RWPE1 (cell line): ENCODE measurements at regions of chr11 and their contacts with region 1.

Region 1: DNA sequence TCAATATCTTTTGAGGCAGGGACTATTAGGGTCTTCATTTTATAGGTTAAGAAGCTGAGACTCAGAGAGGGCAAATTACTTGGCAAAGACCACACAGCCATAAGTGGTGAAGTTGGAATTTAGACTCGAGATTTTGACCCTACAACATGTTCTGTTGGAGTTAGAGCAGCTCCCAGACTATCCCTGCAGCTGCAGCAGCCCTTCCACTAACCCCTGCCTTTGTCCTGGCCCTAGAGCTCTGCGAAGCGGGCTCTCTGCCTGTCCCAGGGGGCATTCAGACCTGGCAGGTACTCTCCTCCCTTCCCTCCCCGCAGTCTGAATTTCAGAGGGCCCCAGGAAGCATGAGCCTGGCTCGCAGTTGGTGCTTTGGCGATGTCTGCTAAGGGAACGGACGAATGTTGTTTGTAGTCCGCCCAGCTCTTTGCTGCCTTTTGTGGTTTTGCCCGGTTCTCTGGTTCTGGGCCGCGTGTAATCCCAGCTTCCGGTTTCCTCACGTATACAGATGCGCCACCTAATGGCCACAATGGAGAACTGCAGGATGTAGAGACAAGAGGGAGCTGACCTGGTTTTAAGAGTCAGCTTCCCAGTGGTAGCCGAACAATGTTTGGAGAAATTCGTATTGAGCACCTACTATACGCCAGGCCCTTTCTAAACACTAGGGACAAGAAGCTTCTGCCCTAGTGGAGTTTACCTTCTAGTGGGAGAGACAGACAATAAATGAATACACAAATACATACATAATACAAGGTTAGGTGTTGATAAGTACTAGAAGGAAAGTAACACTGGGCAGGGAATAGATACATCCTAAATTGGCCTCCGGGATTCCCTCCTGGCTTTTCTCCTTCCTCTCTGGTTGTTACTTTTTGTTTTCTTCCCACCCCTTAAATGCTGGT is 125.2 kb downstream of the ST3GAL4 start:
- DNase-seq: peak; percentile 89
- H3K27ac ChIP-seq: peak overlapping the region; percentile 44
- CTCF ChIP-seq: peak; percentile 89

Region 2: DNA sequence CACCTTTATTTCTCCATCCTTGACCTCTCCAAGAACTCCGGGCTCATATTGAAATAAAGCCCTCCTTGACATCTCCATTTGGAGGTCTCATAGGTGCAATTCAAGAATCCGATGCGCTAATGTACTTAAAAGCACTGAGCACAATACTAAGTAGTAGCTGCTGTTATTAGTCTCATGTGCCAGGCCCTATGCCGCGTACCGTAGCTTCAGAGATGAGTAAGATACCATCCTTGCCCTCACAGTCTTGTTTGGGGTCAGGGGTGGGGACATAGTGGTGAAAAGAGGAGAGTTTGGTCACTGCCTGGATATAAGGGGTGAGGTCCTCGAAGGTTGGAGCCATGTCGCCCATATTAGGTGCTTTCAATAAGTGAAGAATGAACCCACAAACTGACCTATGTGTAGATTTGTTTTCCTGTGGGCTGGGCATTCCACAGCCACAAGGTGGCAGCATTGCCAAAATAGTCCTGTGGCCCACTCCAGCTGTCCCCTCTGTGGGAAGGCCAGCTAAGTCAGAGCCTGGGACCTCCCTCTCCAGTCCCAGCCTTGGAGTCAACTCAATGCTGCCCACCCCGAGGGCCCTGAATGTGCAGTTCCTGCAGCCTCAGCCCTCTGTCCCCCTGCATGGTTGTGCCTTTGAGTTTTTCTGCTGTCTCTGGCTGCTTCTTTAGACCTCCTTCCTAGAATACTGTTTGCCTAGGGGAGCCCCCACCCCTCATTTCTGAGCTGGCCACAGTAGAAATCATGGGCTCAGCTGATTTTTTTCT is 170.2 kb before region 1 on chr11:
- CTCF ChIA-PET with region 1: interaction called, 48 read pairs
- POLR2A ChIA-PET with region 1: no interaction called
- DNase-seq: peak; percentile 60
- H3K27ac ChIP-seq: peak overlapping the region; percentile 33; the same call in 1 of the 2 replicates
- CTCF ChIP-seq: peak; percentile 85

Region 3: DNA sequence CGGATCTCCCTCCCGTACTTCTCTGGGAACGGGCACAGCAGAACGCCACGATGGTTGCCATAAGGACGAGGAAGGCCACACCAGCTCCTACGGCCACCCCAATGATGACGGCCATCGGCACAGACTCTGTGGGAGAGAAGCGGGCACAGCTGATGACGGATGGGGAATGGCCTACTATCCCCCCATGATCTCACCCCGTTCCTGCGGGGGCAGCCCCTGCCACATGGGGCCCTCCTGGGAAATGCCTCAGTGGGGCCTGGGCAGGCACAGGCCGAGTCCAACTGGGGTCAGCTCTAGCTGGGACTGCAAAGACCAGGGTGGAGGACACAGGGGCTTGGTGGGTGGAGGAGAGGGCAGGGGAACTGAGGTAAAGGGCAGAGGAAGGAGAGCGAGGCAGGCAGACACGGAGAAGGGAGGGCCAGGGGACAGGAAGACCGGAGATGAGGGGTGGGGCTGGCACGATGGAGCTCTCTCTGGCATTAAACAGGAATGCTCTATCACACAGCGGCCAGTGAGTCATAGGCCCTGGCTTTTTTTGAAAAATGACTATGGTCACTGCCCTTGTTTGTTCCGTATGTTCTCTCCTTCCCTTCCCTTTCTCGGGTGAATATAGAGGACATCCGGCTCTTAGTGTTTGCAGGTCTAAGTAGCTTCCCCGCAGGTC is 49.1 kb before region 1 on chr11:
- CTCF ChIA-PET with region 1: interaction called, 10 read pairs
- POLR2A ChIA-PET with region 1: no interaction called
- DNase-seq: peak; percentile 89
- H3K27ac ChIP-seq: peak overlapping the region; percentile 87
- CTCF ChIP-seq: no peak

Region 4: DNA sequence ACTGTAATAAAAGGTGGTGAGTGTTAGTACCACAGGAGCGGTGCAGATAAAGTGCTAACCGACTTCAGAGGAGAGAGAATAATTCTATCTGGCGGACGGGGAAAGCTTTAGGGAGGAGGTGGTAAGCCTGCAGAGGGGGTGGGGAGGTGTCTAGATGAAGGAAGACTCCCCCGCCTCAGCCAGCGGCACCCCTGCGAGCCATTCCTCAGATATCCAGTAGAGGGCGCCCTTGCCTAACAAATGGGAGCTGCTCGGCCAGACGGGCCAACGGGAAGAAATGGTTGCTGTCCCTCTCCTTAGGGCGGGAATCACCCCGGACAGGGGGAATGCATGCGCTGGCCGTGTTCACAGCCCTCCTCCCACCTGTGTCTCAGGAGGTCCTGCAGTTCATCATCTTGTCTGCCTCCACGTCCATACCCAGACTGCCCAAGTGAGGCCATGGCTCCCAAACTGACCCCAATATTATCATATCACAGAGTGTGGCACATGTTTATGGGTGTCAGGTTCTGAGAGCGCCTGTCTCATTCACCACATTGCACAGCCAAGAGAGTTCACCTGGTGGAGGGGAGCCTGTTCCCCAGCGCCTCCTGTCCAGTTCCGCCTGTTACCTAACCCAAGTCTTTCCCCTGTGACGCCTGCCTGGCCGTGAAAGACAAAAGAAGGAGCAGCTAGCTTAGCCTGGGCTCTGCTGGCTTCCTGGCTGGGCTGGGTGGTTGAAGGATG is 39.7 kb before region 1 on chr11:
- CTCF ChIA-PET with region 1: interaction called, 46 read pairs
- POLR2A ChIA-PET with region 1: no interaction called
- DNase-seq: peak; percentile 88
- H3K27ac ChIP-seq: no peak overlapping the region
- CTCF ChIP-seq: peak; percentile 88

Region 5: DNA sequence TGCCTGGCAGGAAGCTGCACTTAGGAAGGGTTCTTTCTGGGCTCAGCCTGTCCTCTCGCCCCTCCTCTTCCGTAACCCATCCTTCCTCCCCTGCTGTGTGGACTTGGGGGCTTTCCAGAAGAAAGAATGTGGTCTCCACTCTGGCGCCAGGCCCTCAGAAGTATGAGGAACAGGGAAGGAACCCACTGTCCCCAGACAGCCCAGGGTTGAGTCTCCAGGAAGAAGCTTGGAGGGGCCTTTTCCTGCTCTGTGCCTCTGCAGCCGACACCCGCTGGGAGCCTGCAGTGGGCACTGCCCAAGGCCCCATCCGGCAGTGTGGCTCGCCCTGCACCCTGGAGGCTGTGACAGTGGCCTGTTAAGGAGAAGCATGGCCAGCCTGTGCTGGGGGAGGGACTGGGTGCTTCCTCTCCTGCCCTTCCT is 12.5 kb before region 1 on chr11:
- CTCF ChIA-PET with region 1: interaction called, 15 read pairs
- POLR2A ChIA-PET with region 1: no interaction called
- DNase-seq: no peak
- H3K27ac ChIP-seq: no peak overlapping the region
- CTCF ChIP-seq: no peak

Region 6: DNA sequence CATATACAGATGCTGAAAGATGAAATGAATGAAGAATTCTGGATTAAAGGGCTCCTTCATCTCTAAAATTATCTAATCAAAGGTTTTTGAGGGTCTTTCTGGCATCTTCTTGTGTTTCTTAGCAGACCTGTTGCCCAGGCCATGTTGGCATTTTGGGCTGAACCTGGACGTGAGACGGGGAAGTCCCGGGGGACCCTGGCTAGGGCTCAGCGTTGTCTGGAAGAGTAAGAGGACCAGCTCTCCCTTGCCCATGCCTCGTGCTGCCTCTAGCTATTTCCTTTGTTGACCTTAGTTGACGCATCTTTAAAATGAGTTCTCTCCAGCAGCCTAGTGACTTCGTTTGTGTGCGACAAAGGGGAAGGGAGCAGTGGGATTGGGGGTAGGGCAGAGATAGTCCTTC is 27.0 kb after region 1 on chr11:
- CTCF ChIA-PET with region 1: no interaction called
- POLR2A ChIA-PET with region 1: no interaction called
- DNase-seq: no peak
- H3K27ac ChIP-seq: no peak overlapping the region
- CTCF ChIP-seq: no peak